ENCODE measurements at regions of chr9 and their contacts with region 1.

Region 1: GRCh38 chr9:21789541-21790037 is 12.8 kb upstream of the MTAP start:
- DNase-seq: peak in 4 of 5 donors; percentile 29 to 44 (median 38)
- ATAC-seq: peak; percentile 71 to 95 (median 89)
- H3K4me3 ChIP-seq: peak overlapping the region in 6 of 12 donors; percentile 6 to 39 (median 20)
- H3K27ac ChIP-seq: no peak overlapping the region
- H3K4me1 ChIP-seq: no peaks in the 10 kb centered on the region
- H3K27me3 ChIP-seq: peaks cover 0 to 33% (median 5%) of the 10 kb centered on the region in 9 donors
- CTCF ChIP-seq: peak; percentile 67 to 91 (median 82)
- POLR2A ChIP-seq: no peak

Region 2: GRCh38 chr9:21252721-21253547 is 536.7 kb before region 1 on chr9:
- intact Hi-C with region 1: loop called in 2 of 10 experiments (anchors 10 kb)
- DNase-seq: peak; percentile 26 to 58 (median 33)
- ATAC-seq: peak; percentile 32 to 84 (median 72)
- H3K4me3 ChIP-seq: no peak overlapping the region
- H3K27ac ChIP-seq: no peak overlapping the region
- H3K4me1 ChIP-seq: peaks cover 0 to 11% (median 2%) of the 10 kb centered on the region in 12 donors
- H3K27me3 ChIP-seq: peaks cover 0 to 18% (median 6%) of the 10 kb centered on the region in 9 donors
- CTCF ChIP-seq: peak; percentile 26 to 61 (median 43)
- POLR2A ChIP-seq: no peak

Region 3: DNA sequence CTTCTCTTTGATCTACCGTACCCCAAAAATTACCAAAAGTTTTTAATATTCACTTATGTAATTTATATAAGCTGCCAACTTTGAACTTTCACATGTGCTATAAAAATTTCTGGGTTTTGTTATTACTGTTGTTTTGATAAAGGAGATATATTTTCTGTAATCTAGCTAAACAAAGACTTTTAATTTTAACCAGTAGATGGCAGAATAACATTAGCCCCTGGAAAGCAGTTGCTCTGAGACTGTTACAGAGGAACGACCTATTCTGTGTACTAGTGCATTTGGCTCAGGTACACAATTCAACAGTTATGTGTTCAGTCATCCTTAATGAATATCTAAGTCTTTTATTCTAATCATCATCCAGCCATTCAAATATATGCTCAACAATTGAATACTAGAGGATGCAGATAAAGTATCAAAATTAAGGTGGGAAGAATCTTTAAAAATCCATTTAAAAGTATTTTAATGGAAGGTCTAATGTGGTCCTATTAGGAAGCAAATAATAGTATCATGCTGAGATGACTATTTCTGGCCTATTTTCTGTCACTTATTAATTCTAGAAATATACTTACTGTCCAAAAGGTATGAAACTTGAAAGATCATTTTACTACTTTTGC is 463.0 kb before region 1 on chr9:
- intact Hi-C with region 1: loop called in 6 of 10 experiments (anchors 5 kb)
- DNase-seq: no peak
- ATAC-seq: peak in 3 of 4 donors; percentile 59 to 77 (median 65)
- H3K4me3 ChIP-seq: no peak overlapping the region
- H3K27ac ChIP-seq: no peak overlapping the region
- H3K4me1 ChIP-seq: peaks cover 2 to 51% (median 28%) of the 10 kb centered on the region in 12 donors
- H3K27me3 ChIP-seq: no peaks in the 10 kb centered on the region
- CTCF ChIP-seq: peak; percentile 58 to 79 (median 72)
- POLR2A ChIP-seq: no peak

Region 4: DNA sequence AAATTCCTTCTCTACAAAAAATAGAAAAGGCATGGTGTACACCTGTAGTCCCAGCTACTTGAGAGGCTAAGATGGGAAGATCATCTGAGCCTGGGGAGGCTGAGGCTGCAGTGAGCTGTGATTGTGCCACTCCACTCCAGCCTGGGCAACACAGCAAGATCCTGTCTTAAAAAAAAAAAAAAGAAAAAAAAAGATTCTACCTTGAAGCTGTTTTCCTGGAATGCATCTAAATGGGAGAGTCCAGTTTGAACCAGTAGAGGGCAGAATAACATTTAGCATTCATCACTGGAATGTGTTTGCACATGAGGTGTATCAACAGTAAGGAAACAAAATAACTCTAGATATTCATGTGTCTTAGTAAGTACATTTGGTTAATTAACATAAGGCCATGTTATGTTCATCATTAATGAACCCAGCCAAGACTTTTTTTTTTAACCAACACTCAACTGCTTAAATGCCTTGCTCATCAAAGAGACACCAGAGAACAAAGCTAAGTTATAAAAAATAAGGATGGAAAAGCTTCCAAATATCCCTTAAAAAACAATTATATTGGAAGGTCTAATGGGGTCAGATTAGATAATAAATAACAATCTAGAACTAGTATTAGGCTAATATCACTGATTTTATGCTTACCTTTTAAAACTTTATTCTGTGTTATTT is 323.6 kb before region 1 on chr9:
- intact Hi-C with region 1: loop called in 3 of 10 experiments (anchors 10 kb)
- DNase-seq: no peak
- ATAC-seq: no peak
- H3K4me3 ChIP-seq: no peak overlapping the region
- H3K27ac ChIP-seq: no peak overlapping the region
- H3K4me1 ChIP-seq: no peaks in the 10 kb centered on the region
- H3K27me3 ChIP-seq: peaks cover 0 to 10% (median 0%) of the 10 kb centered on the region in 9 donors
- CTCF ChIP-seq: peak; percentile 15 to 61 (median 41)
- POLR2A ChIP-seq: no peak

Region 5: DNA sequence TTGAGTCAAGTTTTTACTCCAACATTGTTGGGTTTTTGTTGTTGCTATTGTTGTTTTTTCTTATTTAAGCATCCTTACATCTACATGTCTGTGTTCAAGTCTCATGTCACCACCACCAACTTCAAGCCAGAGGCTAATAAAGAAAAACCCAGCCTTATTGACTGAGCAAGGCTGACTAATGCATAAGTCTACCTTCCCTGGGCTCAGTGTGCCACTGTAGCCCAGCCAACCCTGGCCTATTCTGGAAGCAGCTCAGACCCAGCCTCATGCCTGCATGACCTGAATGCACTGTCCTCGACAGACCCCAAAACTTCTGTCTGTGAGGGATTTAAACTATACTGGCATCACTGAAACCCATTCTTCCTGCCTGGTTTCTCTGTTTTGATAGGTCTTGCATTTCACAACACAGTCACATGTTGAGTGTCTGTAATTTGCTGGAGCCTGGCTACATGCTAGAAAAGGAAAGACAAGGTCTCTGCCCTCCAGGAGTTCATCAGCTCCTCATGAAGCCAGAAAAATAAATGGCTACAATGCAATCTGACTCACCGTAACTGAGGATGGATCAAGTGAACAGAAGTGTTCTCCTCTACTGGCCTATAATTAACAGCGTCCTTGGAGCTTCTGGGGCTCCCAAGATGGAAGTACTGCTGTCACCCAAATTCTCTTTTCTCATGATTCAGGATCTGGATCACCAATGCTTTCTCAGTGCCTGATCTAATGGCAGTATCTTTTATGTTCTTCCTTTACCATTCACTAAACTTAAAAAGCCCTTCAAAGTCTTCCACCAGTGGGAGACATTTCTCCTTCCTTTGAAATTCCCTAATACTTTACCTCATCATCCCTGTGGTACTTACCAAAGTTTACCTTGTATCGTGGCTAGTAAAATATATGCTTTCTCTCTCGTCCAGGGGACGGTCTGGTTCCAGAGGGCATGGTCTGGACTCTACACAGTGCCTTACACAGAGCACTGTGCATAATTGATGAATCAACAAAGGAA is 203.5 kb before region 1 on chr9:
- intact Hi-C with region 1: no loop called
- DNase-seq: no peak
- ATAC-seq: no peak
- H3K4me3 ChIP-seq: no peak overlapping the region
- H3K27ac ChIP-seq: no peak overlapping the region
- H3K4me1 ChIP-seq: no peaks in the 10 kb centered on the region
- H3K27me3 ChIP-seq: no peaks in the 10 kb centered on the region
- CTCF ChIP-seq: no peak
- POLR2A ChIP-seq: no peak